Activated T-helper 1 cell treated with anti-CD3 and anti-CD28 coated beads, Interleukin-12 subunit alpha, Interleukin-12 subunit beta, Interleukin-2, Interleukin-4 antibody, amounts not matched to agents 30 ng/mL and 10 ng/mL and 1 ng/mL, durations not matched to agents 14 hours and 24 hours and 36 hours (primary cell): ENCODE measurements at regions of chr4 and their contacts with region 1.

Region 1: DNA sequence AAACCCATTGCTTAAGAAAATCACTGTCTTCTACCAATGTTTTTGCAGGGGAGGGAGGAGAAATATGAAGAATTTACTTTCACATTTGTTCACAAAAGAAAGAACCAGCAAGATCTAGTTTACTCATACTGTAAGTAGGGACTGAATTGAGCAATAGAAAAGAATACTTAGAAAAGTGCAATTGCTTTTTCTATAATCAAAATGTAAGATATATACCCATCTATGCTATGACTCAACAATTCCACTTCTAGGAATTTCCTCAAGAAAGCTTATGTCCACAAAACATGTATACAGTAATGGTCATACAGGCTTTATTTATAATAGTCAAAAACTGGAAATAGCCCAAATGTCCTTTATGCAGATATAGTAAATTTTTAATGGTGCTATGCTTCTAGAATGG is 196.4 kb downstream of the LRBA start:
- DNase-seq: no peak
- H3K4me3 Mint-ChIP-seq: no peak overlapping the region
- H3K27ac Mint-ChIP-seq: no peak overlapping the region
- H3K4me1 Mint-ChIP-seq: peaks cover 18% of the 10 kb centered on the region
- H3K27me3 Mint-ChIP-seq: no peaks in the 10 kb centered on the region

Region 2: GRCh38 chr4:150385606-150386005 is 433.1 kb before region 1 on chr4:
- intact Hi-C with region 1: no loop called
- DNase-seq: no peak
- H3K4me3 Mint-ChIP-seq: no peak overlapping the region
- H3K27ac Mint-ChIP-seq: no peak overlapping the region
- H3K4me1 Mint-ChIP-seq: no peaks in the 10 kb centered on the region
- H3K27me3 Mint-ChIP-seq: no peaks in the 10 kb centered on the region

Region 3: GRCh38 chr4:150402871-150403272 is 415.8 kb before region 1 on chr4:
- intact Hi-C with region 1: loop called (anchors 5 kb)
- DNase-seq: no peak
- H3K4me3 Mint-ChIP-seq: no peak overlapping the region
- H3K27ac Mint-ChIP-seq: no peak overlapping the region
- H3K4me1 Mint-ChIP-seq: no peaks in the 10 kb centered on the region
- H3K27me3 Mint-ChIP-seq: peaks cover 2% of the 10 kb centered on the region

Region 4: GRCh38 chr4:150664935-150665334 is 153.7 kb before region 1 on chr4:
- intact Hi-C with region 1: no loop called
- DNase-seq: no peak
- H3K4me3 Mint-ChIP-seq: no peak overlapping the region
- H3K27ac Mint-ChIP-seq: no peak overlapping the region
- H3K4me1 Mint-ChIP-seq: no peaks in the 10 kb centered on the region
- H3K27me3 Mint-ChIP-seq: no peaks in the 10 kb centered on the region